ENCODE measurements at regions of chr19 and their contacts with region 1.

Region 1: DNA sequence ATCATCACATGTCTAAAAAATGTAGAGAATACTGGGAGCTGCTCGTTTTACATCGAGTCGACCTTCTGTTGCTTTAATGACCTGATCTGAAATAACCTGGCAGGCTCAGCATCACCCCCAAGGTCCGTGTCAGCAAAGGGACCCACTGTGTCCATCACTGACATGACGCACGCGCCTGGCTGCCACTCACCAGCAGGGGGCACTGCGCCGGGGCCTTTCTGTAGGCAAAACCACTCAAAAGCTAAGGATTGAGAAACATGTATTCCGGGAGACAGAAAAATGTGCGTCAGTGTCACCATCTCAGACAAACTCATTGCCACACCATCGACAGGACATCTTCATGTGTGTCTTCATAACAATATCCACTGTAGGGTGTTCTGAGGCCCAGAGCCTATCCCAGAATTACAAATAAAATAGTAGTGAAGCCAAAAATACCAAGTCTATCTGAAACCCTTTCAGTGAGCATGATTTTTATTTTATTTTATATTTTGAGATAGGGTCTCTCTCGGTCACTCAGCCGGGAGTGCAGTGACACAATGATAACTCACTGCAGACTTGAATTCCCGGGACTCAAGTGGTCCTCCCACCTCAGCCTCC is 130.3 kb upstream of the LSM14A start:
- DNase-seq: peak in 1 of 2 experiments; percentile 18
- H3K4me3 ChIP-seq: no peak overlapping the region
- H3K27ac ChIP-seq: no peak overlapping the region
- H3K4me1 ChIP-seq: no peaks in the 10 kb centered on the region
- H3K27me3 ChIP-seq: peaks cover 21% of the 10 kb centered on the region
- CTCF ChIP-seq: peak; percentile 73

Region 2: DNA sequence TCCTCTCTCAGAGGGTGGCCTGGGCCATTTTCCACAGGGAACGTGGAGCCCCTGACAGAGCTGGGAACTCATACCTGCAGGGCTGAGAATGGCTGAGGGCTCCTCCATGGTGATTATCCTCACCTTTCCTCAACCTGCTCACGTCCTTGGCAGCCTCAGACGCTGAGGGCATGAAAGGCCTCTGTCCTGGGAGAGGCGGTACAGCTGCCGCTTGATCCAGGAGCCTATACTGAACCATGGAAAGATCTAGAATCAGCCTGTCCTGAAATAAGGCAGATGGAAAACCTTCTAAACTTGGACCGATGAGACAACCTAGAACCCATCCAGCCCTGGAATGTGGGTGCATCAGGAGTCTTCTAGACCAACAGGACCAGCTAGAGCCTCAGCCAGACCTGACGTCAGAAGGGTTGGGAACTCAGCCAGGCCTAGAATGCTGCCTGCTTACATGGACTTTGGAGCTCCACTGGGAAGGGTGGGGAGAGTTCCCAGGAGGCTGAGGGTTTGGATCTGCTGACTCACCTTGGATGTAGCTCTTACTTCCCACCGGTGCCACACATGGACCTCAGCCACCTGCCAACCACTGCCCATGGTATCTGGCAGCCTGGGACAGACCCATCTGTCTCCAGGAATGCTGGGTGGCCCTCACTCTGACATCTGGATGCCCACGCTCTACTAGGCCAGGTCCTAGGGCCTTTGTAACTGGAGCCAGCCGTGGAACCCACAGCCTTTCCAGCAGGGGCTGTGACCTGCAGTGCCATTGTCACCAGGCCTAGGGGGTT is 237.8 kb before region 1 on chr19:
- CTCF ChIA-PET with region 1: no interaction called
- POLR2A ChIA-PET with region 1: no interaction called
- intact Hi-C with region 1: no loop called
- DNase-seq: peak in 1 of 2 experiments; percentile 14
- H3K4me3 ChIP-seq: no peak overlapping the region
- H3K27ac ChIP-seq: no peak overlapping the region
- H3K4me1 ChIP-seq: no peaks in the 10 kb centered on the region
- H3K27me3 ChIP-seq: no peaks in the 10 kb centered on the region
- CTCF ChIP-seq: no peak

Region 3: DNA sequence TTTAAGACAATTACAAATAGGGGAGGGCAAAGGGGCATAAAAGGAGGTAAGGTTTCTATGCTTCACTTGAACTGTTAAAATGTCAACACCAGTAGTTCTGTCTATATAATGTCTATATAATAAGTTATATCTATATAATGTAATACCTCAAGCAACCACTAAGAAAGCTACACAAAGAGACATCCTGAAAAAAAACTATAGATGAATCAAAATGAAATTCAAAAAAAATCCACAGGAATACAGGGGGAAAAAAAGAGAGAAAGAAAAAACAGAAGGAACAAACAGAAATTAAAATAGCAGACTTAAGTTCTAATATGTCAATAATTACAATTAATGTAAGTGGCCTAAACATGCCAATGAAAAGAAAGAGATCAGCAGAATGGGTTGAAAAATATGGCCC is 59.3 kb before region 1 on chr19:
- CTCF ChIA-PET with region 1: no interaction called
- POLR2A ChIA-PET with region 1: no interaction called
- intact Hi-C with region 1: no loop called
- DNase-seq: no peak
- H3K4me3 ChIP-seq: no peak overlapping the region
- H3K27ac ChIP-seq: no peak overlapping the region
- H3K4me1 ChIP-seq: no peaks in the 10 kb centered on the region
- H3K27me3 ChIP-seq: peaks cover 21% of the 10 kb centered on the region; the same call in 1 of the 2 replicates
- CTCF ChIP-seq: peak; percentile 51

Region 4: DNA sequence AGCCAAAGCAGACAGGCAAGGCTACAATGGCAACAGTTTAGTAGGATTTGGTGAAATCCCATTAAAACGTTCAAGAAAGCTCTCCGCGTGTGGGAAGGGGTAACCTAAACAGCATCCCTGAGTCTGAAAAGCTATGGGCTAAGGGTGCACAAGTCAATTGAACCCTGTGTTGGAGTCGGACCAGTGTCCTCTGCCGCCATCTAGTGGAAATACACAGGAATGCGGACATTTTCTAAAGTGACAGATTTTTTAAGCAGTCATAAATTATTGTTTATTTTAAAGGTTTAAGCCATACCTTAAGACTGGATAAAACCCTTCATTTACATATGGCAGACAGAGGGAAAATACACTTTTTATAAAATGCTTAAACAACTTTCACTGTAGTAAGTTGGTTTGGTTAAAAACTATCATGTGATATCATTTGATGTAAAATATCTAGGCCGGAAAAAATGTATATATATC is 103.7 kb after region 1 on chr19:
- CTCF ChIA-PET with region 1: no interaction called
- POLR2A ChIA-PET with region 1: no interaction called
- intact Hi-C with region 1: loop called (anchors 1 kb)
- DNase-seq: peak; percentile 44 to 49
- H3K4me3 ChIP-seq: no peak overlapping the region
- H3K27ac ChIP-seq: no peak overlapping the region
- H3K4me1 ChIP-seq: no peaks in the 10 kb centered on the region
- H3K27me3 ChIP-seq: no peaks in the 10 kb centered on the region
- CTCF ChIP-seq: peak; percentile 84